HepG2 (cell line): ENCODE measurements at regions of chr17 and their contacts with region 1.

Region 1: GRCh38 chr17:73311781-73312641 is at the start of gene CDC42EP4:
- DNase-seq: peak; percentile 90
- ATAC-seq: peak; percentile 85
- H3K4me3 ChIP-seq: peak within 1 kb of the TSS; percentile 80 to 99 (median 99)
- H3K27ac ChIP-seq: peak within 1 kb of the TSS; percentile 87
- H3K4me1 ChIP-seq: peaks cover 57% of the 10 kb centered on the region
- H3K27me3 ChIP-seq: peaks cover 4 to 16% of the 10 kb centered on the region in 2 experiments; a peak in 4 of 5 replicates
- CTCF ChIP-seq: 0 out of 2 replicates have a peak, but pooled peaks have one; percentile 12
- EP300 ChIP-seq: no peak; a peak in 1 of 4 replicates
- POLR2A ChIP-seq: peak; percentile 43 to 93
- RAD21 ChIP-seq: 0 out of 2 replicates have a peak, but pooled peaks have one; percentile 31
- total RNA-seq, gene CDC42EP4: 54.0 and 55.0 TPM in 2 replicates

Region 2: DNA sequence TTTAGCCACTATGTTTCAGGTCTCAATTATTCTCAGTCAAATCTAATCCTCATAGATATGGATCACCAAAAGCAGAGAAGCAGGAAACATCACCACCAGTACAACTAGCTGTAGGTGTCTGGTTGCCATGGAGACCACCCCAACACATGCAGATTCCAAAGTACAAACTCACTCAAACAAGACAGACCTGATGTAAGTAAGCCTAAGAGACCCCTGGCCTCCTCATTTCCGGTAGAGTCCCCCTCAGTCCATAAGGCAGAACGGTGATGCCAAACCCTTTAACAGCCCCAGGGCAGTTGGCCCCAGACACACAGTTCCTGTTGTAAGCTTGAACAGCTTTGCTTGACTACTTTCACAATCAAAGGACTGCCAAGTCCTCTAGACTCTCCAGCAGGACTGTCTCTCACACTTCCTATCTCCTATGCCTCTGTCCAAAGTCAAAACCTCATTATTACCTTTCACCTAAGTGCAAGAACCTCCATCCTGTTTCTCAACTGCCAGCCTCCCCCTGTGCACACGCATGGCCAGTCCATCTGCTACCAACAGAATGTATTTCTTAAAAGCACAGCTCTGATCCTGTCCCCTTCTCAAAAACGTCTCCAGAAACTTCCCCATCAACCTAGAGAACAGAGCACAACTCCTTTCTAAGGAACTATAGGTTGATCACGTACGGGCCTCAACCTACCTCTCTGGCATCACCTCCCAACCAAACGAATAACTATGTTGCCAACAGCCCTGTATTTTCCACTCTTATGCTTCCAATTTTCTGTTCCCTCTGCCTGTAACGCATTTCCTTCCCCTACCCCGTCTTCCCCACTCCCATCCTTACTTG is 243.5 kb before region 1 on chr17:
- CTCF ChIA-PET with region 1: no interaction called
- POLR2A ChIA-PET with region 1: no interaction called
- in situ Hi-C with region 1: no loop called
- intact Hi-C with region 1: no loop called
- DNase-seq: peak; percentile 99
- ATAC-seq: peak; percentile 94
- H3K4me3 ChIP-seq: peak overlapping the region in 1 of 3 experiments; percentile 17; a peak in 1 of 6 replicates
- H3K27ac ChIP-seq: peak overlapping the region; percentile 91
- H3K4me1 ChIP-seq: peaks cover 56% of the 10 kb centered on the region
- H3K27me3 ChIP-seq: no peaks in the 10 kb centered on the region
- CTCF ChIP-seq: no peak
- EP300 ChIP-seq: peak; percentile 82 to 92; a peak in 3 of 4 replicates
- POLR2A ChIP-seq: peak; percentile 50 to 59; a peak in 2 of 4 replicates
- RAD21 ChIP-seq: peak; percentile 34

Region 3: DNA sequence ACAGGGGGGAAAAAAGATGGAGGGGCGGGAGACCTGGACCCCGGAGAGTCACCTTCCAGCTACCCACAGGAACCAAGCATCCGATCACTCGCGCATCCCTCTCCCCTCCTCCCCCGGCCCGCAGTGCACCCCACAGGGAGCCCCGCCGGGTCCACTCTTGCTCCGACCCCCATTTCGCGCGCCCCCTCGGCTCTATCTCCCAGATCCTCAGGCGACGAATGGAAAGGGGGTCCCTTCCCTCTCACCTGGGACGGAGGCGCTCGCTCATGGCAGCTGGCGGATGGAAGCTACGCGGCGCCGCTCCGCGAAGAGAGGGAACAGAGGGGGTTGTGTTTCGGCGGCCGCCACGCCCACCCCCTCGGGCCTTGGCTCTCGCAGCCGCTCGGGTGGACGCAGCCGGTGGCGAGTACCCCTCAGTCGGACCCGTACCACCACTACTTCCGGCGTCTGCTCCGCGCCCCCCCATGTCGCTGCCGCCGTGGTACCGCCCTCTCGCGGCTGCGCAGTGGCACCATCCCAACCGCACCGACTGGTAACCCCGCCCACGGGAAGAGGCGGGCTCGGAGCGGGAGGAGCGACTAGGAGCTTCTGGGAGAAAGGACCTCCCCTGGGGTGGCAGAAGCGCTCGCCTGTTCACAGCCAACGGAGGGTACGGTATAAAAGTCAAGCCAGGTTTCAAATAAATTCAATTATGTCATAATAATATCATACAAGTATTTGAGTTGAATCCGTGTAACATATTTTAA is 80.0 kb before region 1 on chr17:
- CTCF ChIA-PET with region 1: no interaction called
- POLR2A ChIA-PET with region 1: interaction called, 20 read pairs
- in situ Hi-C with region 1: no loop called
- intact Hi-C with region 1: no loop called
- DNase-seq: peak; percentile 94
- ATAC-seq: peak; percentile 91
- H3K4me3 ChIP-seq: peak overlapping the region; percentile 97 to 98 (median 97)
- H3K27ac ChIP-seq: peak overlapping the region; percentile 77
- H3K4me1 ChIP-seq: peaks cover 61% of the 10 kb centered on the region
- H3K27me3 ChIP-seq: peaks cover 0 to 4% of the 10 kb centered on the region in 2 experiments; a peak in 1 of 5 replicates
- CTCF ChIP-seq: peak; percentile 78
- EP300 ChIP-seq: no peak; a peak in 1 of 4 replicates
- POLR2A ChIP-seq: peak; percentile 60 to 87
- RAD21 ChIP-seq: peak; percentile 51; the same call in 1 of the 2 replicates

Region 4: DNA sequence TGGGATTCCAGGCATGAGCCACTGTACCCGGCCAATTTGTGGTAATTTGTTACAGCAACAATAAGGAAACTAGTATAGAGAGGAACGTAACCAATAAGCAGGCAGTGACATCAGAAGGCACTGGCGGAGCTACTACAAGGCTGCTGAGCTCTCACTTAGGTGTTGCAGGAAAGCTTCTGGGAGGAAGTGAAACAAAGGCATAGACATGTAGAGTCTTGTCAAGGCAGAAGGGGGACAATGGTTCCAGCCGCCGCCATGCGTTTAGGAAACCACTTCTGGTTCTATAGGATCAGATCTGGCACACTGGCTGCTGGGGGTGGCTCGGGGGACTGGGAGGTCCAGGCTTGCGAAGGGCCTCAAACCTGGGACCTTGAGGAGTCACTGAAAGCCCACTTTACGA is 40.9 kb before region 1 on chr17:
- CTCF ChIA-PET with region 1: no interaction called
- POLR2A ChIA-PET with region 1: interaction called, 12 read pairs
- in situ Hi-C with region 1: no loop called
- intact Hi-C with region 1: no loop called
- DNase-seq: no peak
- ATAC-seq: no peak
- H3K4me3 ChIP-seq: no peak overlapping the region
- H3K27ac ChIP-seq: no peak overlapping the region
- H3K4me1 ChIP-seq: peaks cover 79% of the 10 kb centered on the region
- H3K27me3 ChIP-seq: no peaks in the 10 kb centered on the region
- CTCF ChIP-seq: no peak
- EP300 ChIP-seq: no peak
- POLR2A ChIP-seq: no peak
- RAD21 ChIP-seq: no peak

Region 5: DNA sequence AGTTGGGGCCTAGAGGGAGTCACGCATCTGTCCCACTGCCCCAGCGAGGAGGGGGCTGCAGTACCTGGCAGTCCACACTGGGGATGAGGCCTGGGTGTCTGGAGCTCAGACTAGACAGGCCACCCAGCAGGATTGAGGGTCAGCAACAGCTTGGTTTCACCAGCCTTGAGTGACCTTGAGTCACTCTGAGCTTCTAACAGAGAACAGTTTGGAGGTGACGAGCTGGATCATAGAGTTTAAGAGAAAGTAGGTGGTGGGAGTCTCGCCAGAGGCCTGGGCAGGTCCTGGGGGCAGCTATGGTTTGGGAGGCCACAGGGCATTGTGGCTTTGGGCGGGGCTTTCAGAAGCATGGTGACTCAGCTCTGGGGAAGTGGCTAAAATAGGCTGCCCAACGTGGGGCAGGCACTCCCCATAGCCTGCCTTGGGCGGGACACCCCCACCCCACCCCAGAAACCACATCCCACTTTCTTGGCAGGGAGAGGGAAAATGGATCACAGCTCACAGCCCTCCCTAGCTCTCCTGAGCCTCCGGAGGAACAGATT is 20.7 kb before region 1 on chr17:
- CTCF ChIA-PET with region 1: no interaction called
- POLR2A ChIA-PET with region 1: interaction called, 77 read pairs
- in situ Hi-C with region 1: no loop called
- intact Hi-C with region 1: loop called (anchors 1 kb)
- DNase-seq: no peak
- ATAC-seq: no peak
- H3K4me3 ChIP-seq: no peak overlapping the region; a peak in 1 of 6 replicates
- H3K27ac ChIP-seq: peak overlapping the region; percentile 15
- H3K4me1 ChIP-seq: peaks cover 95% of the 10 kb centered on the region
- H3K27me3 ChIP-seq: no peaks in the 10 kb centered on the region
- CTCF ChIP-seq: no peak; the same call in 1 of the 2 replicates
- EP300 ChIP-seq: no peak
- POLR2A ChIP-seq: no peak
- RAD21 ChIP-seq: no peak

Region 6: GRCh38 chr17:73359987-73360410 is 48.0 kb after region 1 on chr17:
- CTCF ChIA-PET with region 1: no interaction called
- POLR2A ChIA-PET with region 1: interaction called, 6 read pairs
- in situ Hi-C with region 1: loop called (anchors 5 kb)
- intact Hi-C with region 1: loop called (anchors 2 kb)
- DNase-seq: peak; percentile 72
- ATAC-seq: peak; percentile 82
- H3K4me3 ChIP-seq: peak overlapping the region in 1 of 3 experiments; percentile 32; a peak in 1 of 6 replicates
- H3K27ac ChIP-seq: no peak overlapping the region
- H3K4me1 ChIP-seq: peaks cover 52% of the 10 kb centered on the region
- H3K27me3 ChIP-seq: peaks cover 30 to 83% of the 10 kb centered on the region in 2 experiments
- CTCF ChIP-seq: peak; percentile 70
- EP300 ChIP-seq: no peak
- POLR2A ChIP-seq: no peak
- RAD21 ChIP-seq: peak; percentile 70